ENCODE measurements at regions of chr6 and their contacts with region 1.

Region 1: DNA sequence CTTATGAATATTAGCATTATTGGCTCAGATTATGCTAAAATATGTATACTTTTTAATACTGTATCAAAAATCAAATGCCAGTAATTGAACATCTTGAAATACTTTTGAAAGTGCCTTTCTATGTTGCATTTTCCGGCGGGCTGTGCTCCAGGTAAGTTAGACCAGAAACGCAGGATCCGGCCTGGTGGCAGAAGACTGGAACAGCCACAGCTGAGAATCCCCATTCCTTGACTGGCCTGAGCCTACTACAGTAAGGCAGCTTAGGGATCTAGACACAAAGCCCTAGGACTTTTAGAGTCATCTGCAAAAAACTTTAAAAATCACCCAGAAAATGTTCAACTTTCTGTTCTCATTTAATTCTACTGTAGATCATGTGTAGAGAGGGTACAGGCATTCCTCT is 138.8 kb upstream of the C6orf118 start:
- DNase-seq: peak in 1 of 5 donors; percentile 29
- H3K4me3 ChIP-seq: no peak overlapping the region
- H3K27ac ChIP-seq: no peak overlapping the region
- H3K4me1 ChIP-seq: no peaks in the 10 kb centered on the region
- H3K27me3 ChIP-seq: no peaks in the 10 kb centered on the region
- CTCF ChIP-seq: no peak

Region 2: GRCh38 chr6:165689699-165690098 is 241.5 kb after region 1 on chr6:
- intact Hi-C with region 1: no loop called
- DNase-seq: no peak
- H3K4me3 ChIP-seq: no peak overlapping the region
- H3K27ac ChIP-seq: no peak overlapping the region
- H3K4me1 ChIP-seq: no peaks in the 10 kb centered on the region
- H3K27me3 ChIP-seq: no peaks in the 10 kb centered on the region
- CTCF ChIP-seq: no peak

Region 3: GRCh38 chr6:165755583-165755982 is 307.4 kb after region 1 on chr6:
- intact Hi-C with region 1: no loop called
- DNase-seq: peak in 2 of 5 donors; percentile 31 to 50
- H3K4me3 ChIP-seq: no peak overlapping the region
- H3K27ac ChIP-seq: no peak overlapping the region
- H3K4me1 ChIP-seq: peaks cover 0 to 12% (median 0%) of the 10 kb centered on the region in 3 donors
- H3K27me3 ChIP-seq: no peaks in the 10 kb centered on the region
- CTCF ChIP-seq: no peak

Region 4: DNA sequence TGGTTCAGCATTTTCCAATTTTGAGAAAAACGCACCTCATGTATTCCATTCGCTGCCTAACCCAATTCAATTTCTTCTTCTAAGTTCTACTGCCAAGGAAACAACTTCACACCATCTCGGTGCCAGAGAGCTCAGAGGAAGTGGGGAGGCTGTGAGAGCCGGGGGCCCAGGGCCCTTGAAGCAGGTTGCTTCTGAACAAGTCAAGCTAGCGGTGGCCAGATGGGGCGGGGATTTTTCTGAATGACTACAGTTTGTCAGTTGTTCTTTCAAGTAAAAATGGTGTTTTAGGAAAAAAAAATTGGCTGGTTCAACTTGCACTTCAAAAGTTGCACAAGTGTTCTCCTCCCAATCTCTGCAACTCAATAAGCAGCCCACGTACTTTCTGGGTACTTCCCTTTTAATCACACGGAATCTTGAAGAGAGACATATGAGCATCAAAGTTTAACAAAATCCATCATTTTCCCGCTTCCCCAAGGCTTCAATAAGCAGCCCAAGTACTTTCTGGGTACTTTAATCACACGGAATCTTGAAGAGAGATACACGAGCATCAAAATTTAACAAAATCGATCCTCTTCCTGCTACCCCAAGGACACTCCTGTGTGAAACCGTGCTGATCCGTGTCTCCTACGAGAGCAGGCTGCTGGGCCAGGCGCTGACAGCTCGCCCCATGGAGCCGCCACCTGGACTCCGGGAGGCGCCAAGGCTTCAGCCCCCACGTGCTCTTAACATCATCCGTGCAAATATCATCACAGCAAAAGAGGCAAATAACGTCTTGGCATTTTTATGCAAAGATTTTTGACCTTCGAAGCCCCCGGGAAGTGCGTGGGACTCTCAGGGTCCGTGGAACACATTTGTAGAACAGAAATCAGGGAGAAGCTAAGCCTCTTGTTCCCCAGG is 401.6 kb after region 1 on chr6:
- intact Hi-C with region 1: loop called (anchors 5 kb)
- DNase-seq: no peak
- H3K4me3 ChIP-seq: peak overlapping the region in 1 of 3 donors; percentile 30
- H3K27ac ChIP-seq: no peak overlapping the region
- H3K4me1 ChIP-seq: peaks cover 0 to 7% (median 0%) of the 10 kb centered on the region in 3 donors
- H3K27me3 ChIP-seq: peaks cover 3% of the 10 kb centered on the region
- CTCF ChIP-seq: no peak

Measured in kidney (tissue), 22 donors.